Activated CD4-positive, alpha-beta memory T cell treated with anti-CD3 and anti-CD28 coated beads for 36 hours (primary cell): ENCODE measurements at regions of chr12 and their contacts with region 1.

Region 1: GRCh38 chr12:123580772-123581171 is 3.6 kb upstream of the TMED2 start:
- DNase-seq: no peak
- H3K4me3 Mint-ChIP-seq: no peak overlapping the region
- H3K27ac Mint-ChIP-seq: no peak overlapping the region
- H3K4me1 Mint-ChIP-seq: peaks cover 20% of the 10 kb centered on the region
- H3K27me3 Mint-ChIP-seq: no peaks in the 10 kb centered on the region

Region 2: GRCh38 chr12:123388177-123388947 is 192.4 kb before region 1 on chr12:
- CTCF ChIA-PET with region 1: interaction called, 5 read pairs
- POLR2A ChIA-PET with region 1: interaction called, 6 read pairs
- intact Hi-C with region 1: loop called (anchors 1 kb)
- DNase-seq: peak; percentile 86
- H3K4me3 Mint-ChIP-seq: peak overlapping the region; percentile 80
- H3K27ac Mint-ChIP-seq: peak overlapping the region; percentile 88
- H3K4me1 Mint-ChIP-seq: peaks cover 39% of the 10 kb centered on the region
- H3K27me3 Mint-ChIP-seq: no peaks in the 10 kb centered on the region

Region 3: GRCh38 chr12:123478762-123479161 is 102.0 kb before region 1 on chr12:
- CTCF ChIA-PET with region 1: interaction called, 3 read pairs
- POLR2A ChIA-PET with region 1: interaction called, 3 read pairs
- intact Hi-C with region 1: loop called (anchors 5 kb)
- DNase-seq: no peak
- H3K4me3 Mint-ChIP-seq: no peak overlapping the region
- H3K27ac Mint-ChIP-seq: no peak overlapping the region
- H3K4me1 Mint-ChIP-seq: peaks cover 36% of the 10 kb centered on the region
- H3K27me3 Mint-ChIP-seq: no peaks in the 10 kb centered on the region

Region 4: GRCh38 chr12:123601602-123602489 is 21.1 kb after region 1 on chr12 and contains the start of gene DDX55:
- CTCF ChIA-PET with region 1: interaction called, 5 read pairs
- POLR2A ChIA-PET with region 1: no interaction called
- intact Hi-C with region 1: loop called (anchors 1 kb)
- DNase-seq: peak; percentile 90
- H3K4me3 Mint-ChIP-seq: peak within 1 kb of the TSS; percentile 84
- H3K27ac Mint-ChIP-seq: peak within 1 kb of the TSS; percentile 90
- H3K4me1 Mint-ChIP-seq: peaks cover 30% of the 10 kb centered on the region
- H3K27me3 Mint-ChIP-seq: no peaks in the 10 kb centered on the region
- total RNA-seq, gene DDX55: 44.0 to 45.1 TPM

Region 5: DNA sequence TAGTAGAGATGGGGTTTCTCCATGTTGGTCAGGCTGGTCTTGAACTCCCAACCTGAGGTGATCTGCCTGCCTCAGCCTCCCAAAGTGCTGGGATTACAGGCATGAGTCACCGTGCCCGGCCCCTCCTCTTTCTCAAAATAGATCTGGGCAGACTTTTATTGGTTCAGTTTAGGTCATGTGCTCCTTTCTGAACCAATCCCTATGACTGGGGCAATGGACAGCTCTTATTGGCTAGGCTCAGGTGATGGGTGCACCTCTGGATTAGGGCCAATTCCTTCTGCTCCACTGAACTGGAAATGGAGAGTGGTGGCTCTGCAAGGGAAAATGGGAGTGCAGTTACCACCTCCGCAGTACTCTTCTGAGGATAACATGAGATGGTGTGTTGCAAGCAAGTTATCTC is 125.2 kb after region 1 on chr12:
- CTCF ChIA-PET with region 1: no interaction called
- POLR2A ChIA-PET with region 1: no interaction called
- intact Hi-C with region 1: no loop called
- DNase-seq: no peak
- H3K4me3 Mint-ChIP-seq: no peak overlapping the region
- H3K27ac Mint-ChIP-seq: no peak overlapping the region
- H3K4me1 Mint-ChIP-seq: peaks cover 2% of the 10 kb centered on the region
- H3K27me3 Mint-ChIP-seq: no peaks in the 10 kb centered on the region